Activated CD4-positive, alpha-beta T cell treated with anti-CD3 and anti-CD28 coated beads, Interleukin-2, amount 10 ng/mL, durations not matched to agents 24 days and 14 days (primary cell): ENCODE measurements at regions of chr7 and their contacts with region 1.

Region 1: DNA sequence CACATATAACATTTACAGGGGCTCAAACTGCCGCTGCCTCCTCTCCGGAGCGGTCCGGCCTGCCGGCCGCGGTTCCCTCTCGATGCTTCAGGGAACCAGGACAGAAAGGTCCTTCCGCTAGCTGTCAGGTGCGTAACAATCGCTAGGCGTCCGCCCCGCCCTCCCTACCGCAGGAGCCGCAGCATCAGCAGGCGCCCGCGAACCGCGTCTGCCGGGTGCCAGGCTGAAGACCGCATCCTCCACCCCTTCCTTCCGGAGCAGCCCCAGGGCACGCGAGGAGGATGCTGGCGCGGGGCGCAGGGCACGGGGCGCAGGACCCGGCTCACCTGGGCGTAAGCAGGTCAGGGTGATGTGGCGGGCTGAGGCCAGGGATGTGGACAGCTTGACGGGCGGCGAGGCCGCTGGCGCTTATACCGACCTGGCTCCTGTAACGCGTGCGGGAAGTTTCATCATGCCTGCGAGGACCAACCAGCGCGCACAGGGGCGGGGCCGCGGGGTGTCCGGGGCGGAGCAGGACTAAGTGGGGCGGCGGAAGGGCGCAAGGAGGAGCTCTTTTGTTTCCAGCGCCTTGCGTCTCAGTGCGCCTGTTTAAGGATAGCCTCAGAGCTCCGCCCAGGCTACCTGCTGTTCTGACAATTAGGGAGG is at the start of gene ASNS:
- DNase-seq: peak; percentile 97
- H3K4me3 Mint-ChIP-seq: peak within 1 kb of the TSS; percentile 92
- H3K27ac Mint-ChIP-seq: peak within 1 kb of the TSS; percentile 88
- H3K4me1 Mint-ChIP-seq: peaks cover 13% of the 10 kb centered on the region
- H3K27me3 Mint-ChIP-seq: no peaks in the 10 kb centered on the region
- total RNA-seq, gene ASNS: 80.6 and 84.1 TPM in 2 replicates

Region 2: GRCh38 chr7:97117372-97118188 is 754.6 kb before region 1 on chr7 and contains the start of gene SDHAF3:
- intact Hi-C with region 1: loop called (anchors 1 kb)
- DNase-seq: peak; percentile 99
- H3K4me3 Mint-ChIP-seq: peak within 1 kb of the TSS; percentile 93
- H3K27ac Mint-ChIP-seq: peak within 1 kb of the TSS; percentile 95
- H3K4me1 Mint-ChIP-seq: peaks cover 26% of the 10 kb centered on the region
- H3K27me3 Mint-ChIP-seq: no peaks in the 10 kb centered on the region
- total RNA-seq, gene SDHAF3: 24.9 and 27.8 TPM in 2 replicates

Region 3: DNA sequence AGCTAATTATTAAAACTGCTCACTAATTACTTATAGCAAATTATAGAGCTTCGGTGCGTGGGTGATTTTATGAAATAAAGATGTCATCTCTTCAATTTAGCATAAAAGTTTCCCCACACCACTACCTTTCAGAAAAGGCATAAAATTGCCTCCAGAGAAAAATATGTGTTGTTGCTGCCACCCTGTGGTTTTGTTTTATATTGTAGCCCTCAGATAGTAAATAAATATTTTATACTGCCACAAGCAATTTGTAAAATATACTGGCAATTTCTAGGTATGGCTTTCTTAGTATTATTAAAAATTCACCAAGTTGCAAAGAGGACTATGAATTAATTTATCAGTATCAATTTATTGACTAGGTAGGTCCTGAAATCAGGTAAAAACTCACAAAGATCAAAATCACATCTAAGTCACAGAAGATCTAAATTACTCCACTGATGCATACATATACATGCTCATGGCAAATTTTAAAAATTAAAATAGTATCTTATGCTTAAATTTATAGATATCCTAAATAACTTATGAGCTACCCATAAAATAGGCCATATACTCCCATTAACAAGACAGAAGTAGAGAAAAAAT is 26.4 kb before region 1 on chr7:
- intact Hi-C with region 1: no loop called
- DNase-seq: no peak
- H3K4me3 Mint-ChIP-seq: no peak overlapping the region
- H3K27ac Mint-ChIP-seq: no peak overlapping the region
- H3K4me1 Mint-ChIP-seq: no peaks in the 10 kb centered on the region
- H3K27me3 Mint-ChIP-seq: peaks cover 2% of the 10 kb centered on the region

Region 4: DNA sequence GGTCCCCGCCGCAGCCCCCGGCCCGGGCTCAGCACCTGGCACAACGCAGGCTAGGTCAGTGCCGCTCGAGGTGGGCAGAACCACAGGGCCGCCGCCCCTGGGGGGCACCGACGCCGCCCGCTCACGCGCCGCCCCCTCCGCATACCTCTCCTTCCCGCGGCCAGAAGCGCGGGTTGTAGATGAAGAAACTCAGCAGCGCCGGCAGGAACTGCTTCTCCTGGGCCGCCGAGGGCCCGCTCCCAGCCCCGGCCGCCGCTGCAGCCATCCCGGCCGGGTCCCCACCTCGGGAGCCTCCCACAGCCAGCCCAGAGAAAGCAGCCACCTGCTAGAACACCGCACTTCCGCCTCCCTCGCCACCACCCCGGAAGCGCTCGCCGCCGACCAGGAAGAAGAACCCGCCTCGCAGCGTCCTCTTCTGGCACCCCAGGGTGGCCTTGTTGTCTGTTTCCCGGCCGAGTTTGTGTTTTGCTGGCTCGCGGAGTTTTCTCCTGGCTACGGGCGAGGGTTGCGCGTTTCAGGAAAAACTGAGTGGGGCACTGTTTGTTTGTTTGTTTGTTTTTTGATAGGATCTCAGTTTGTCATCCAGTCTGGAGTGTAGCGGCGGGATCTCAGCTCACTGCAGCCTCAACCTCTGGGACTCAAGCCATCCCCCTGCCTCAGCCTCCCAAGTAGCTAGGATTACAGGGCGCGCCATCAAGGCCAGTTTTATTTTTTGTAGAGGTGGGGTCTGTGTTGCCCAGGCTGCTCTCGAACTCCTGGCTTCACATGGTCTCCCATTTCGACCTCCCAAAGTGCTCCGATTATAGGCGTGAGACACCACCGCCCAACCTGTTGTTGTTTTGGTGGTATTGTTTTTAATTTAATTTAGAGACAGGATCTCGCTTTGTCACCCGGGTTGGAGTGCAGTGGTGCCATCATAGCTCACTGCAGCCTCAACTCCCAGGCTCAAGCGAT is 100.1 kb after region 1 on chr7:
- intact Hi-C with region 1: loop called (anchors 5 kb)
- DNase-seq: peak; percentile 95
- H3K4me3 Mint-ChIP-seq: peak overlapping the region; percentile 96
- H3K27ac Mint-ChIP-seq: peak overlapping the region; percentile 95
- H3K4me1 Mint-ChIP-seq: peaks cover 12% of the 10 kb centered on the region
- H3K27me3 Mint-ChIP-seq: peaks cover 2% of the 10 kb centered on the region

Region 5: DNA sequence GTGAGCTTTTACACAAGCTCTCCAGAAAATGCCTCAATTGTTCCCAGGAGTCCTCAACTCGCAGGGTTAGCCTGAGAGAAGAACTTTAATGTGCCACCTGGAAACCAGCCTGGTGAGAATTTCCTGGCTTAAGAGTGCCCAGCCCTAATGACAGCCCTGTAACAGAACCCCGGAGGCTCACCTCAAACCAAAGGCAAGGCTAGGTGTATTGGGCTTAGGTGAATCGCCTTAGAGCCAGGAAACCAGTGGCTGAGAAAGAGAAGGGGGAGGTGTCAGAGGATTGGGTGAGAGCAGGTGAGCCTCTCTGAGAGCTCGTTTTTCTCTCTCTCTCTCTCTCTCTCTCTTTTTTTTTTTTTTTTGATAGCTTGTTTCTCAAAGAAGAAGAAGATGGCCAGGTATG is 110.5 kb after region 1 on chr7:
- intact Hi-C with region 1: no loop called
- DNase-seq: no peak
- H3K4me3 Mint-ChIP-seq: no peak overlapping the region
- H3K27ac Mint-ChIP-seq: no peak overlapping the region
- H3K4me1 Mint-ChIP-seq: no peaks in the 10 kb centered on the region
- H3K27me3 Mint-ChIP-seq: peaks cover 3% of the 10 kb centered on the region

Region 6: GRCh38 chr7:98251841-98252639 is 379.9 kb after region 1 on chr7 and contains the start of gene TECPR1:
- intact Hi-C with region 1: loop called (anchors 2 kb)
- DNase-seq: peak; percentile 98
- H3K4me3 Mint-ChIP-seq: peak within 1 kb of the TSS; percentile 98
- H3K27ac Mint-ChIP-seq: peak within 1 kb of the TSS; percentile 98
- H3K4me1 Mint-ChIP-seq: peaks cover 52% of the 10 kb centered on the region
- H3K27me3 Mint-ChIP-seq: no peaks in the 10 kb centered on the region
- total RNA-seq, gene TECPR1: 43.1 and 47.8 TPM in 2 replicates

Region 7: GRCh38 chr7:98539879-98540278 is 667.7 kb after region 1 on chr7:
- intact Hi-C with region 1: no loop called
- DNase-seq: no peak
- H3K4me3 Mint-ChIP-seq: no peak overlapping the region
- H3K27ac Mint-ChIP-seq: no peak overlapping the region
- H3K4me1 Mint-ChIP-seq: no peaks in the 10 kb centered on the region
- H3K27me3 Mint-ChIP-seq: no peaks in the 10 kb centered on the region